Thyroid gland (tissue), 4 donors: ENCODE measurements at regions of chr13 and their contacts with region 1.

Region 1: GRCh38 chr13:112942689-112943308 is 26.2 kb upstream of the MCF2L start:
- DNase-seq: peak; percentile 99
- H3K4me3 ChIP-seq: peak overlapping the region; percentile 35 to 58 (median 47)
- H3K27ac ChIP-seq: peak overlapping the region in 2 of 3 donors; percentile 51 to 77
- H3K4me1 ChIP-seq: peaks cover 8 to 14% of the 10 kb centered on the region in 2 donors
- H3K27me3 ChIP-seq: no peaks in the 10 kb centered on the region
- CTCF ChIP-seq: peak; percentile 87 to 98 (median 96)
- POLR2A ChIP-seq: peak in 1 of 2 donors; percentile 40

Region 2: GRCh38 chr13:113001241-113002140 is 58.7 kb after region 1 on chr13:
- intact Hi-C with region 1: loop called (anchors 10 kb)
- DNase-seq: peak; percentile 82 to 85
- H3K4me3 ChIP-seq: peak overlapping the region in 2 of 3 donors; percentile 8 to 32
- H3K27ac ChIP-seq: peak overlapping the region in 1 of 3 donors; percentile 9
- H3K4me1 ChIP-seq: peaks cover 11 to 17% of the 10 kb centered on the region in 2 donors
- H3K27me3 ChIP-seq: no peaks in the 10 kb centered on the region
- CTCF ChIP-seq: peak in 1 of 6 experiments; percentile 7
- POLR2A ChIP-seq: peak in 1 of 2 donors; percentile 7

Region 3: DNA sequence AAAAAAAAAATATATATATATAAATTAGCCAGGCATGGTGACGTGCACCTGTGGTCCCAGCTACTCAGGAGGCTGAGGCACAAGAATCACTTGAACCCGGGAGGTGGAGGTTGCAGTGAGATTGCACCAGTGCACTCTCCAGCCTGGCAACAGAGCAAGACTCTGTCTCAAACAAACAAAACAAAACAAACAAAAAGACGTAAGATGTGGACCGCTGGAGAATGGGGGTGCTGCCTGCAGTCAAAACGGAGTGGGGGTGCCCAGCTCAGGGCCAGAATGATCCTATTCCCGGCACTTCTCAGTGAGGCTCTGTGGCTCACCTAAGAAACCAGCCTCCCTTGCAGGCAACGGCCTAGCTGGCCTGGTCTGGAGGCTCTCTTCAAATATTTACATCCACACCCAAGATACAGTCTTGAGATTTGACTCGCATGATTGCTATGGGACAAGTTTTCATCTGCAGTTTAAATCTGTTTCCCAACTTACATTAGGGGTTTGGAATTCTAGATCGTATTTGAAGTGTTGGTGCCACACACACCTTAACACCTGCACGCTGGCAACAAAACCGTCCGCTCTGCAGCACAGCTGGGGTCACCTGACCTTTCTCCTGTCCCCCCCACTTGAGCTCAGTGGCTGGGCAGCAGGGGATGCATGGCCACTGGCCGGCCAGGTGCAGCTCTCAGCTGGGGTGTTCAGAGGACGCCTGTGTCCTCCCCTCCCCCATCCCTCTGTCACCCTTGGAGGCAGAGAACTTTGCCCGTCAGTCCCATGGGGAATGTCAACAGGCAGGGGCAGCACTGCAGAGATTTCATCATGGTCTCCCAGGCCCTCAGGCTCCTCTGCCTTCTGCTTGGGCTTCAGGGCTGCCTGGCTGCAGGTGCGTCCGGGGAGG is 162.5 kb after region 1 on chr13 and contains the start of gene F7:
- intact Hi-C with region 1: no loop called
- DNase-seq: no peak
- H3K4me3 ChIP-seq: no peak within 1 kb of the TSS
- H3K27ac ChIP-seq: no peak within 1 kb of the TSS
- H3K4me1 ChIP-seq: peaks cover 0 to 6% of the 10 kb centered on the region in 2 donors
- H3K27me3 ChIP-seq: peaks cover 9% of the 10 kb centered on the region
- CTCF ChIP-seq: no peak
- POLR2A ChIP-seq: no peak
- total RNA-seq, gene F7: not detected

Region 4: DNA sequence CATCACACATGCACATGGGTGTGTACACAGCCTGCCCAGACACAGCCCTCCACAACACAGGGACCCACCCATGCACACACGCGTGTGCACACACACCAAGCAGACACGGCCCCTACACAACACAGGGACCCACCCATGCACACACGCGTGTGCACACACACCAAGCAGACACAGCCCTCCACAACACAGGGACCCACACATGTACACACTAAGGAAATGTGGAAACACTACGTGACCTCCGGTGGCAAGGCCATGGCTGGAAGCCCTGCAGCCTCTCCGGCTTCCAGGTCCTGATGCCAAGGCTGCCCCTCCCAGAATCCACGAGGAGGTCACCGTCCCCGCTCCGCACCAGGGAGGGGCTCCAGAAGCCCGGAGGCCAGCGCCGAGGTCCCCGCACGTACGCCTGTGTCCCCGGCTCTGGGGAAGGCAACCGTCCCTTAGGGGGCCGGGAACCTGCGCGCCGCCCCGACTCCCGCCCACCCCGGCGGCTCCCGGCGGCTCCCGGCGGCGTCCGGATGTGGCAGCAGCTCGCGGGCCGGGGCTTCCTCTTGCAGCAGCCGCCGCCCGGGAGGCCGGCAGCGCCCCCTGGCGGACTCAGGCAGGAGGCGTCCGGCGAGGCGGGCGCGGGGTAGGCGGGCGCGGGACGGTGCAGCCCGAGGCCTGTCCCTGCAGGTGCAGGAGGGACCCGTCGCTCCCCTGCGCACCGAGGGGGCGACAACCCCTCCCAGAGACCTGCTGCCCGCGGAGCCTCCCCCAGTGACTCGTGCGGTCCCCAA is 451.0 kb after region 1 on chr13:
- intact Hi-C with region 1: loop called (anchors 10 kb)
- DNase-seq: peak; percentile 80 to 81
- H3K4me3 ChIP-seq: peak overlapping the region in 1 of 3 donors; percentile 58
- H3K27ac ChIP-seq: peak overlapping the region in 1 of 3 donors; percentile 28
- H3K4me1 ChIP-seq: peaks cover 0 to 13% of the 10 kb centered on the region in 2 donors
- H3K27me3 ChIP-seq: no peaks in the 10 kb centered on the region
- CTCF ChIP-seq: peak in 5 of 6 experiments; percentile 36 to 99 (median 89)
- POLR2A ChIP-seq: no peak